Activated CD8-positive, alpha-beta T cell treated with anti-CD3 and anti-CD28 coated beads for 36 hours (primary cell): ENCODE measurements at regions of chr18 and their contacts with region 1.

Region 1: GRCh38 chr18:57544936-57545660 is 41.4 kb downstream of the FECH start:
- DNase-seq: no peak
- ATAC-seq: no peak
- H3K4me3 Mint-ChIP-seq: no peak overlapping the region
- H3K27ac Mint-ChIP-seq: no peak overlapping the region
- H3K4me1 Mint-ChIP-seq: peaks cover 13% of the 10 kb centered on the region
- H3K27me3 Mint-ChIP-seq: no peaks in the 10 kb centered on the region
- CTCF ChIP-seq: no peak

Region 2: DNA sequence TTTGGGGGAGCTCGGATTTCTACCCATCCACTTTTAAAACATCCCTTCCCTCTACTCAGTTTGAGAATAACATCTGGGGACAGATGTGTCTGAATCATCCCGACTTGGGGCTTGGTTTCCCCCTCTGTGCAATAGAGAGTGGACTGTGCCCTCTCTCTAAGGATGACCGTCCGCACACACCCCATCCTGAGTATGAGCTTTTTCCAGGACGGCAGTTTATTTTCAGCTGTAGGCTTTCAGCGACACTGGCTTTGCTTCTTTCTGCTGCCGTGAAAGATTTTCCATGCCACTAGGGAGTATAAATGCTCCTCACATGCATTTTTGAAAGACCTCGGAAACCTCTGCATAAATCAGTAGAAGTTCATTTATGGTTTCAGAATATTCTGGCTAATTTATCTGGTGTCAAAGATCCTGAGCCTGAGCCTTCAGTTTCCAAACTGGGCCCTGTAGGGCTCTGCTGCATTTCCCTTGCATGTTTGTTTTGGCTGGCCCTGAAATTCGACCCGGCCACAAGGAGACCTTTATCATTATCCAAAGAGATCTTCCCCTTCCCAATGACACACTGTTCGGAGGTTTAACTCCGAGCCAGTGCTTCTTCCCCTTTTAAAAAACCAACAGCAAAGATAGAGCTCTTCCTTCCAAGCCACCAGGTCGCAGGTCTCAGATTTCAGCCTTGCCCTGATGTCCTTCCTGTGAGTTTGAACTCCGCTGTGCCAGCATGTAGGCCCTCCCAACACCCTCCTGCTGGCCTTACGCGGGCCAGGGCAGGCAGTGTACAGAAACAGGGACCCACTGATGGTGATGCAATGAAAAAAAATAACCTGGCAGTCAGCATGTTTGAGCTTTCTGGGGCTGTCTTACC is 11.9 kb before region 1 on chr18:
- CTCF ChIA-PET with region 1: no interaction called
- POLR2A ChIA-PET with region 1: no interaction called
- intact Hi-C with region 1: no loop called
- DNase-seq: no peak
- ATAC-seq: no peak
- H3K4me3 Mint-ChIP-seq: no peak overlapping the region
- H3K27ac Mint-ChIP-seq: no peak overlapping the region
- H3K4me1 Mint-ChIP-seq: no peaks in the 10 kb centered on the region
- H3K27me3 Mint-ChIP-seq: no peaks in the 10 kb centered on the region
- CTCF ChIP-seq: no peak

Region 3: GRCh38 chr18:57561728-57562423 is 16.8 kb after region 1 on chr18:
- CTCF ChIA-PET with region 1: interaction called, 12 read pairs
- POLR2A ChIA-PET with region 1: no interaction called
- intact Hi-C with region 1: no loop called
- DNase-seq: peak; percentile 15
- ATAC-seq: peak; percentile 66
- H3K4me3 Mint-ChIP-seq: no peak overlapping the region
- H3K27ac Mint-ChIP-seq: no peak overlapping the region
- H3K4me1 Mint-ChIP-seq: peaks cover 2% of the 10 kb centered on the region
- H3K27me3 Mint-ChIP-seq: no peaks in the 10 kb centered on the region
- CTCF ChIP-seq: peak; percentile 94

Region 4: DNA sequence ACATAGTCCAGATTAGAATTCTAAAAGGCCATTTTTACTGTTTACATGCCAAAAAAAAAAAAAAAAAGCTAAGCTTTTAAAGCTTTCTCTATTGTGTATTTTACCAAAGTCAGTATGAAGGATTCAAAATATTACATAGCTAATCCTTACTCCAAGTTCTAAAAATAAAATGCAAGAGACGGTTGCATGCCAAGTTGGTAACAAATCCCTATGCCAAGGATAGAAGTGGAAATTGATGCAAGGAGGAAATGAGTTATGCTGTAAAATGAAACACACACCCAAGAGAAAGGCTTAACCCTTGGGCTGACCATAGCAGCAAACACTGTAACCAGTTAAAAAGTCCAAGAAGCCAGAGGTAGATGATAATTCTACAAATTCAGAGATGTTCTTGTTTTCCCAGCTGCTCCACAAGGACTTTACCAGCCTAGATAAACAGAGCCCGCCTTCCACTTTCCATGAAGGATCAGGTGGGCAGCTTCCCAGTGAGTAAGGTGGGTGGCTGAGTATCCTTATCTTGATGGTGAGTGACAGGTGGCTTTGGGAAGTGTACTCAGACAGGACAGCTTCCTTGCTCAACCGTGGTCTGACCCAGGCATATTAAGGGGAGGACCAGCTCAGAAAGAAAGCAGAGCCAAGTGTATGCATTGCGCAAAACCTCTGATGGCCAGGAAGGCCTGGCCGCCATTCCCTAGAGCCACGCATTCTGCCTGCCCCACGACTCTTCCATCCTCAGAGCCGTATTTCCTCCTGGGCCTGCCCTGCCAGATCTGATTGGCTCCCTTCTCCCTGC is 223.6 kb after region 1 on chr18:
- CTCF ChIA-PET with region 1: no interaction called
- POLR2A ChIA-PET with region 1: no interaction called
- intact Hi-C with region 1: no loop called
- DNase-seq: no peak
- ATAC-seq: no peak
- H3K4me3 Mint-ChIP-seq: no peak overlapping the region
- H3K27ac Mint-ChIP-seq: no peak overlapping the region
- H3K4me1 Mint-ChIP-seq: no peaks in the 10 kb centered on the region
- H3K27me3 Mint-ChIP-seq: no peaks in the 10 kb centered on the region
- CTCF ChIP-seq: no peak